HCT116 (cell line): ENCODE measurements at regions of chr1 and their contacts with region 1.

Region 1: GRCh38 chr1:181021811-181022434 is 747 bp downstream of the STX6 start:
- DNase-seq: no peak
- ATAC-seq: peak; percentile 38
- H3K4me3 ChIP-seq: peak overlapping the region; percentile 82 to 94
- H3K27ac ChIP-seq: peak overlapping the region; percentile 84
- H3K4me1 ChIP-seq: peaks cover 6 to 12% of the 10 kb centered on the region in 2 experiments
- H3K27me3 ChIP-seq: no peaks in the 10 kb centered on the region; the same call in 1 of the 2 replicates
- CTCF ChIP-seq: no peak
- POLR2A ChIP-seq: no peak
- RAD21 ChIP-seq: no peak

Region 2: DNA sequence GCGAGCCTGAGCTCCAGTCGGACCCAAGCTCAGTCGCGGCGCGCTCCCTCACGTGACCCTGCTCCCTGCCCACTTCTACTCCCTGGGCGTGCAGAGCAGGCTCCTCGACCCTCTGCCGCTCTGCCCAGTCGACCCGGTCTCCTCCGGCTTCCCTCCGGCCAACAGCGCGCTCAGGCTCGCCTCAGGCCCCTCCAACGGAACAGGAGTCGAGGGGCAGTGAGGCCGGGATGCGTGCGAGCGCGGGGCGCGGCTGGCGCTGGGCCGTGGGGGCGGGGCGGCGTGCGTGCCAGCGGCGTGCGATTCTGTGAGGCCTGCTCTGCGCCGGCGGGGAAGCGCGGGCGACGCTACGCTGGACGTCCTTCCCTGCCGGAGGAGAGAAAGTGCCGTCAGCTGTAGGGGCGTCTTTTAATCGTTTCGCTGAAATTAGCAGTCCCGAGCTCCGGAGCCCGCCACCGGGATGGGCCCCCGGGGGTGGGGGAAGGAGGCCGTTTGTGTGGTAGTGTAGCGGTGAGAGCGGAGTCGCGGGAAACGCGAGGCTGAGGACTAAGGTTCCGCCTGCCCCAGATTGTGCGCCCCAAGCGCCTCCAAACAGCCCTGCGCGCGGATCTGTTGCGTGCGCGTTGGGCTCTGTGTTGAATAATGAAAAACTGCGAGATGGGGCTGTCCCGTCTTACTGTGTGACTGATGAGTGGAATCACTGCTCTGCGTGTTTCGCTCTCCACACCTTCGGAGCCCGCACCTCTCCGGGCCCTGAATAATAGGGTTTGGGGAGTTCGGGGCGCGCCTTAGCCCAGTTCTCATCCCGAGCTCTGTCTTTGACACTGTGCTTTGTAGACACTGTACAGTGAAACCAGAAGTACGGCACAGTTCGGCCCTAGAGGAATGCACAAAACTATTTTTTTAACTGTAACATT is 519.3 kb before region 1 on chr1 and contains the start of gene ACBD6:
- CTCF ChIA-PET with region 1: no interaction called
- POLR2A ChIA-PET with region 1: no interaction called
- RAD21 ChIA-PET with region 1: no interaction called
- intact Hi-C with region 1: loop called (anchors 5 kb)
- DNase-seq: peak; percentile 74
- ATAC-seq: peak; percentile 87
- H3K4me3 ChIP-seq: peak within 1 kb of the TSS; percentile 92
- H3K27ac ChIP-seq: peak within 1 kb of the TSS; percentile 71
- H3K4me1 ChIP-seq: peaks cover 7 to 28% of the 10 kb centered on the region in 2 experiments; a peak in 3 of 4 replicates
- H3K27me3 ChIP-seq: no peaks in the 10 kb centered on the region
- CTCF ChIP-seq: peak in 2 of 3 experiments; percentile 8 to 12; a peak in 1 of 6 replicates
- POLR2A ChIP-seq: peak; percentile 65
- RAD21 ChIP-seq: no peak
- total RNA-seq, gene ACBD6: 43.2 TPM

Region 3: GRCh38 chr1:180888870-180889269 is 133.1 kb before region 1 on chr1:
- CTCF ChIA-PET with region 1: no interaction called
- POLR2A ChIA-PET with region 1: no interaction called
- RAD21 ChIA-PET with region 1: no interaction called
- intact Hi-C with region 1: no loop called
- DNase-seq: no peak
- ATAC-seq: no peak
- H3K4me3 ChIP-seq: no peak overlapping the region
- H3K27ac ChIP-seq: no peak overlapping the region
- H3K4me1 ChIP-seq: no peaks in the 10 kb centered on the region
- H3K27me3 ChIP-seq: no peaks in the 10 kb centered on the region
- CTCF ChIP-seq: no peak
- POLR2A ChIP-seq: no peak
- RAD21 ChIP-seq: no peak

Region 4: GRCh38 chr1:181033799-181034451 is 12.0 kb after region 1 on chr1 and contains the start of gene MR1:
- CTCF ChIA-PET with region 1: no interaction called
- POLR2A ChIA-PET with region 1: interaction called, 13 read pairs
- RAD21 ChIA-PET with region 1: no interaction called
- intact Hi-C with region 1: no loop called
- DNase-seq: peak; percentile 81
- ATAC-seq: peak; percentile 81
- H3K4me3 ChIP-seq: peak within 1 kb of the TSS; percentile 49 to 59
- H3K27ac ChIP-seq: peak within 1 kb of the TSS; percentile 9
- H3K4me1 ChIP-seq: peaks cover 2 to 18% of the 10 kb centered on the region in 2 experiments; a peak in 3 of 4 replicates
- H3K27me3 ChIP-seq: no peaks in the 10 kb centered on the region
- CTCF ChIP-seq: no peak
- POLR2A ChIP-seq: no peak
- RAD21 ChIP-seq: no peak
- total RNA-seq, gene MR1: 6.6 TPM